Thyroid gland (tissue), 4 donors: ENCODE measurements at regions of chr12 and their contacts with region 1.

Region 1: GRCh38 chr12:50074936-50075807 is 10.0 kb upstream of the SMARCD1 start:
- DNase-seq: peak; percentile 82 to 86
- H3K4me3 ChIP-seq: no peak overlapping the region
- H3K27ac ChIP-seq: no peak overlapping the region
- H3K4me1 ChIP-seq: peaks cover 0 to 4% of the 10 kb centered on the region in 2 donors
- H3K27me3 ChIP-seq: no peaks in the 10 kb centered on the region
- CTCF ChIP-seq: peak; percentile 58 to 99 (median 96)
- POLR2A ChIP-seq: no peak

Region 2: DNA sequence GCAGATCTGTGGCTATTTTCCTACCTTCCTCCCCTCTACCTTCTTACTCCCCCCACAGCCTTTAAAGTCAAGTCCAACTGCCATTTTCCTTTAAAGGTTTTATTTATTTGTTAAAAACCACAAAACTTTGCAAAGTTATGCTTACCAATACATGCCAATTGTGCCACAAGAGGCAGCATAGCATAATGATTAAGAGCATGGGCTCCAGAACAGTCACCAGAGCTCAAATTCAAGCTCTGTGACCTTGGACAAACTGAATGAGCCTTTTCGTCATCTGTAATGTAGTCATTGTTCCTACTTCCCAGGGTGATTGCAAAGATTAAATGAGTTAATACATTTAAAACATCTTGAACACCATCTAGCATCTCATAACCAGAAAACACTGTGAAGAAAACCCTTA is 355.0 kb before region 1 on chr12:
- intact Hi-C with region 1: no loop called
- DNase-seq: no peak
- H3K4me3 ChIP-seq: no peak overlapping the region
- H3K27ac ChIP-seq: no peak overlapping the region
- H3K4me1 ChIP-seq: no peaks in the 10 kb centered on the region
- H3K27me3 ChIP-seq: no peaks in the 10 kb centered on the region
- CTCF ChIP-seq: no peak
- POLR2A ChIP-seq: no peak

Region 3: DNA sequence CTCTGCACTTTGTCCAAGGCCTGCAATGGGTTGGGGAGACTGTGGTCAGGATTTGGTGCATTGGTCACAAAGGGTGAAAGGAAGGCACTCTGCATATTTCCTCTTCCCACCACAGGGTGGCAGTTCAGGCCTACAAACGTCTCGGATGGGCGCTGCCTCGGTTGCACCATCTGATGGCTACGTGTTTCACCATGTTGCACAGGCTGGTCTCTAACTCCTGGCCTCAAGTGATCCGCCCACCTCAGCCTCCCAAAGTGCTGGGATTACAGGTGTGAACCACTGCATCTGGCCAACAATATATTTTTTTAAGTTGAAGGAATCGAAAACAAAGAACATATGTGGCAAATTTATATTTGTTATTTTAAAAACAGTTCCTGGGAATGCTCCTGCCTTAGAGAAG is 298.8 kb before region 1 on chr12:
- intact Hi-C with region 1: loop called (anchors 5 kb)
- DNase-seq: peak; percentile 55
- H3K4me3 ChIP-seq: no peak overlapping the region
- H3K27ac ChIP-seq: no peak overlapping the region
- H3K4me1 ChIP-seq: no peaks in the 10 kb centered on the region
- H3K27me3 ChIP-seq: no peaks in the 10 kb centered on the region
- CTCF ChIP-seq: peak; percentile 40 to 80 (median 74)
- POLR2A ChIP-seq: no peak

Region 4: DNA sequence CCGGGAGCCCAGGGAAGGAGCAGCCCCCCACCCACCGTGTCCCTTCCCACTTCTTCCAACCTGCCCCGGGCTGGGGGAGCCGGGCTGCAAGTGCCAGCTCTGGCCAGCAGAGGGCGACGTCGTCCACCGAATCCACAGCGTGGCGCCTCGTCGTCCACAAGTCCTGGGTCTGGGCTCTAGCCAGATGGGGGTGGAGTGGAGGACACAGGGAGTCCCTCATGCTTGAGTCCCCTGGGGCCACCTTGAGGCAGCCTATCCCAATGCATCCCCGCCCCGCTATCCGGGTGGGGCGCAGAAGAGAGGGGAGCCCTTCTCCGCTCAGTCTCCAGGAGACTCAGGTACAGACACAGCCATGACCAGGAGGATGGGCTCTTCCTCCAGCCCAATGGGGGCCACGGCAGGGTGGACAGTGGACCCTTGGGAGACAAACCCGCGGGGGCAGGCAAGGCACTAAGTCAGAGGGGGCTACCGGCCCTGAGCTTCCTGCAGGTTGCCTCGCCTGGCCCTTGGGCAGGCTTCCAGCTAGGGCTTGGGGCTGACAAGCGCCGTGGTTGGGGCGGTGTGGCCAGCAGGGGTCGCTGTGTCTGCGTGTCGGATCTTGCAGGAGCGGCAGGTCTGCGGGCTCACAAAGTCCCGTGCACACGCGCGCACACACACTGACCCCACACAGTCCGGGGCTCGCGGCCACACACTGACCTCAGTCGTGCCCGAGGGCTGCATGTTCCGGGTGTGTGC is 108.0 kb before region 1 on chr12:
- intact Hi-C with region 1: loop called (anchors 5 kb)
- DNase-seq: peak; percentile 89 to 92
- H3K4me3 ChIP-seq: no peak overlapping the region
- H3K27ac ChIP-seq: no peak overlapping the region
- H3K4me1 ChIP-seq: peaks cover 16 to 31% of the 10 kb centered on the region in 2 donors
- H3K27me3 ChIP-seq: no peaks in the 10 kb centered on the region
- CTCF ChIP-seq: peak; percentile 73 to 91 (median 80)
- POLR2A ChIP-seq: no peak

Region 5: GRCh38 chr12:50111693-50112455 is 36.7 kb after region 1 on chr12 and contains the start of gene COX14:
- intact Hi-C with region 1: no loop called
- DNase-seq: peak; percentile 99
- H3K4me3 ChIP-seq: peak within 1 kb of the TSS; percentile 70 to 94 (median 92)
- H3K27ac ChIP-seq: peak within 1 kb of the TSS; percentile 93 to 98 (median 97)
- H3K4me1 ChIP-seq: peaks cover 40 to 58% of the 10 kb centered on the region in 2 donors
- H3K27me3 ChIP-seq: no peaks in the 10 kb centered on the region
- CTCF ChIP-seq: peak in 5 of 6 experiments; percentile 2 to 95 (median 91)
- POLR2A ChIP-seq: peak; percentile 91 to 97
- total RNA-seq, gene COX14: 40.6 to 135 (median 90.9) TPM

Region 6: GRCh38 chr12:50174971-50175715 is 100.0 kb after region 1 on chr12:
- intact Hi-C with region 1: loop called (anchors 5 kb)
- DNase-seq: peak; percentile 59 to 64
- H3K4me3 ChIP-seq: no peak overlapping the region
- H3K27ac ChIP-seq: no peak overlapping the region
- H3K4me1 ChIP-seq: no peaks in the 10 kb centered on the region
- H3K27me3 ChIP-seq: no peaks in the 10 kb centered on the region
- CTCF ChIP-seq: peak in 5 of 6 experiments; percentile 52 to 89 (median 61)
- POLR2A ChIP-seq: no peak

Region 7: GRCh38 chr12:50314629-50315312 is 239.6 kb after region 1 on chr12:
- intact Hi-C with region 1: loop called (anchors 10 kb)
- DNase-seq: no peak
- H3K4me3 ChIP-seq: no peak overlapping the region
- H3K27ac ChIP-seq: no peak overlapping the region
- H3K4me1 ChIP-seq: no peaks in the 10 kb centered on the region
- H3K27me3 ChIP-seq: no peaks in the 10 kb centered on the region
- CTCF ChIP-seq: peak in 4 of 6 experiments; percentile 36 to 66 (median 51)
- POLR2A ChIP-seq: no peak